Mammary epithelial cell (primary cell): ENCODE measurements at regions of chr17 and their contacts with region 1.

Region 1: GRCh38 chr17:17467720-17468119 is 9.1 kb upstream of the MED9 start:
- DNase-seq: no peak
- H3K4me3 ChIP-seq: no peak overlapping the region
- H3K27ac ChIP-seq: no peak overlapping the region
- H3K4me1 ChIP-seq: peaks cover 5% of the 10 kb centered on the region
- H3K27me3 ChIP-seq: no peaks in the 10 kb centered on the region
- CTCF ChIP-seq: no peak

Region 2: GRCh38 chr17:17354560-17355349 is 113.0 kb before region 1 on chr17:
- CTCF ChIA-PET with region 1: no interaction called
- dilution Hi-C with region 1: no loop called
- in situ Hi-C with region 1: no loop called
- intact Hi-C with region 1: no loop called
- DNase-seq: peak; percentile 26
- H3K4me3 ChIP-seq: no peak overlapping the region
- H3K27ac ChIP-seq: no peak overlapping the region
- H3K4me1 ChIP-seq: no peaks in the 10 kb centered on the region
- H3K27me3 ChIP-seq: no peaks in the 10 kb centered on the region
- CTCF ChIP-seq: peak; percentile 66 to 82

Region 3: DNA sequence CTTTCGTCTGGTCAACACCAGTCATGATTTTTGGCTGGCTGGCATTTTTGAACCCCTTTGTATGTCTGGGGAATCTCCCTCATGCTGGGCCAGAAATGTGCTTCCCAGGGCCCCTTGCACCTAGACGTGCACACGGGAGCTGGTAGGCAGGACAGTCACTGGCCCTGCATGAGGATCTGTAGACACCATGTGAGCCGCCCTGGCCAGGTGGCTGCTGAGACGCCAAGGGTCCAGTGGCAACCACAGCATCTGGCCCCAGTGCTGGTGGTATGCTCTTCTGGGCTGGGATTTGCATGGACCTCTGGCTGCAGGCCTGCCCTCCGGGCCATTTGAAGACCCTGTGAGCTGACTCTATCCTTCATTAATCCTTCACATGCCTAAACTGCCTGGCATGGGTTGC is 97.0 kb before region 1 on chr17:
- CTCF ChIA-PET with region 1: no interaction called
- dilution Hi-C with region 1: loop called (anchors 5 kb)
- in situ Hi-C with region 1: no loop called
- intact Hi-C with region 1: no loop called
- DNase-seq: no peak
- H3K4me3 ChIP-seq: no peak overlapping the region
- H3K27ac ChIP-seq: no peak overlapping the region
- H3K4me1 ChIP-seq: no peaks in the 10 kb centered on the region
- H3K27me3 ChIP-seq: no peaks in the 10 kb centered on the region
- CTCF ChIP-seq: no peak

Region 4: DNA sequence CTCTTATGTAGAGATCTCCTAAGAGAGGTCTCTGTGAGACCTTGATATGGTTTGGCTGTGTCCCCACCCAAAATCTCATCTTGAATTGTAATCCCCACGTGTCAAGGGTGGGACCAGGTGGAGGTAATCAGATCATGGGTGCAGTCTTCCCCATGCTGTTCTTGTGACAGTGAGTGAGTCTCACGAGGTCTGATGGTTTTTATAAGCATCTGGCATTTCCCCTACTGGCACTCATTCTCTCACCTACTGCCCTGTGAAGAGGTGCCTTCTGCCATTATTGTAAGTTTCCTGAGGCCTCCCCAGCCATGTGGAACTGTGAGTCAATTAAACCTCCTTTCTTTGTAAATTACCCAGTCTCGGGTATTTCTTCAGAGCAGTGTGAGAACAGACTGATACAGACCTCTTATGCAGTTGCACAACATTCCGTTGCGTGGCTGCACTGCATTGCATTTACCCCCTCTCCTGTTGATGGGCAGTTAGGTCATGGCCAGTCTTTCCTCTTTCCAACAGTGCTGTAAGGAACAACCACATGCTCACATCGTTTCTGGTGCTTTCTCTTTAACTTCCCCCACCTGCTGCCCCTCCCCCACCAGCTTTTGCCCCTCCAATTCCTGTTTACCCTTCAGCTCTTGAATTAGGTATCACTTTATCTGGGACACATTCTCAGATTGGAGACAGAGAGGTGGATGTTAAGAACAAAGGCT is 34.6 kb before region 1 on chr17:
- CTCF ChIA-PET with region 1: no interaction called
- dilution Hi-C with region 1: loop called (anchors 5 kb)
- in situ Hi-C with region 1: no loop called
- intact Hi-C with region 1: no loop called
- DNase-seq: no peak
- H3K4me3 ChIP-seq: no peak overlapping the region
- H3K27ac ChIP-seq: no peak overlapping the region
- H3K4me1 ChIP-seq: no peaks in the 10 kb centered on the region
- H3K27me3 ChIP-seq: peaks cover 3% of the 10 kb centered on the region
- CTCF ChIP-seq: no peak

Region 5: GRCh38 chr17:17515934-17516930 is 48.5 kb after region 1 on chr17:
- CTCF ChIA-PET with region 1: no interaction called
- dilution Hi-C with region 1: loop called (anchors 5 kb)
- in situ Hi-C with region 1: no loop called
- intact Hi-C with region 1: no loop called
- DNase-seq: peak; percentile 18
- H3K4me3 ChIP-seq: no peak overlapping the region
- H3K27ac ChIP-seq: no peak overlapping the region
- H3K4me1 ChIP-seq: peaks cover 11% of the 10 kb centered on the region
- H3K27me3 ChIP-seq: peaks cover 10% of the 10 kb centered on the region
- CTCF ChIP-seq: no peak

Region 6: GRCh38 chr17:17628388-17629008 is 160.8 kb after region 1 on chr17:
- CTCF ChIA-PET with region 1: no interaction called
- dilution Hi-C with region 1: no loop called
- in situ Hi-C with region 1: no loop called
- intact Hi-C with region 1: no loop called
- DNase-seq: no peak
- H3K4me3 ChIP-seq: no peak overlapping the region
- H3K27ac ChIP-seq: no peak overlapping the region
- H3K4me1 ChIP-seq: peaks cover 6% of the 10 kb centered on the region
- H3K27me3 ChIP-seq: no peaks in the 10 kb centered on the region
- CTCF ChIP-seq: no peak